Activated CD8-positive, alpha-beta T cell treated with anti-CD3 and anti-CD28 coated beads, Interleukin-2, amount 10 ng/mL, durations not matched to agents 7 days and 5 days (primary cell): ENCODE measurements at regions of chr16 and their contacts with region 1.

Region 1: GRCh38 chr16:66406534-66407221 is 20.4 kb upstream of the BEAN1 start:
- DNase-seq: peak; percentile 93
- ATAC-seq: peak; percentile 94
- H3K4me3 Mint-ChIP-seq: peak overlapping the region; percentile 77
- H3K27ac Mint-ChIP-seq: peak overlapping the region; percentile 60
- H3K4me1 Mint-ChIP-seq: peaks cover 27% of the 10 kb centered on the region
- H3K27me3 Mint-ChIP-seq: peaks cover 18% of the 10 kb centered on the region

Region 2: DNA sequence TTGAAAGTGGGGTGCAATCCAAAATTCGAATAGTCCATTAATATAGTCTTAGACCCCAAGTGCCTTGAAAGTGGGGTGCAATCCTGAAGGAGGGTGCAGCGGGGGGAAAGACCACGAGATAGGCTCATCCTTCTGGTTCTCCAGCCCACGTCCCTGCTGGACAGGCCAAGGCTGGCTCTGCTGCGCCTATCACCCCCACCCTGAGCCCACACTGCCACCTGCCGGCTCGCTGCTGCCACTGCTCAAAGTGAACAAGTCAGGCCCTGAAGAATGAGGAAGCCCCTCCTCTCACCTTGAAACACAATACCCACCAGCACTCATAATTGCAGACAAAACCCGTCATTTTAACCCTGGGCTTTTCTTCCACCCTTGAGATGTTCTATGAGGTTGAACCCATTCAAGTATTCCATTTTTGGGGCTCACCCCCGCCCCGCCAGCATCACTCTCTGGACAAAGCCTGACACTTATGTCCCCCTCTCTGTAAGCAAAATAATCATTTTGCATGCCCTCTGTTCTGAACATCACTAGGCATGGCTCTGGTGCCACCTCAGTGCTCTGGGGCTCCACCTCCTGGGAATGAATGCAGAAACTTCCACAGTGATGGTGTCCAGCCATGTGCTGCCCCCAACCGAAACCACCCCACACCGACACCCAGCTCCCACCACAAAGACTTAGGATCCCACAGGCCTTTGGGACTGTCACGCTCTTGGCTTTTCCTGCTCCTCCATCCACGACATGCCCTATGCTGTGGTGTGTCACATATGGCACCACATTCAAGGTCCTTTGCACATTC is 77.2 kb after region 1 on chr16:
- CTCF ChIA-PET with region 1: interaction called, 195 read pairs
- POLR2A ChIA-PET with region 1: no interaction called
- DNase-seq: peak; percentile 83
- ATAC-seq: peak; percentile 76
- H3K4me3 Mint-ChIP-seq: no peak overlapping the region
- H3K27ac Mint-ChIP-seq: peak overlapping the region; percentile 9
- H3K4me1 Mint-ChIP-seq: peaks cover 38% of the 10 kb centered on the region
- H3K27me3 Mint-ChIP-seq: no peaks in the 10 kb centered on the region

Region 3: GRCh38 chr16:66495440-66495839 is 88.8 kb after region 1 on chr16:
- CTCF ChIA-PET with region 1: no interaction called
- POLR2A ChIA-PET with region 1: no interaction called
- DNase-seq: no peak
- ATAC-seq: no peak
- H3K4me3 Mint-ChIP-seq: no peak overlapping the region
- H3K27ac Mint-ChIP-seq: no peak overlapping the region
- H3K4me1 Mint-ChIP-seq: peaks cover 7% of the 10 kb centered on the region
- H3K27me3 Mint-ChIP-seq: peaks cover 8% of the 10 kb centered on the region

Region 4: GRCh38 chr16:66552286-66553177 is 145.9 kb after region 1 on chr16 and contains the start of gene CKLF:
- CTCF ChIA-PET with region 1: interaction called, 14 read pairs
- POLR2A ChIA-PET with region 1: interaction called, 4 read pairs
- DNase-seq: peak; percentile 93
- ATAC-seq: peak; percentile 80
- H3K4me3 Mint-ChIP-seq: peak within 1 kb of the TSS; percentile 90
- H3K27ac Mint-ChIP-seq: peak within 1 kb of the TSS; percentile 92
- H3K4me1 Mint-ChIP-seq: peaks cover 75% of the 10 kb centered on the region
- H3K27me3 Mint-ChIP-seq: no peaks in the 10 kb centered on the region
- total RNA-seq, gene CKLF: 137 to 139 TPM

Region 5: DNA sequence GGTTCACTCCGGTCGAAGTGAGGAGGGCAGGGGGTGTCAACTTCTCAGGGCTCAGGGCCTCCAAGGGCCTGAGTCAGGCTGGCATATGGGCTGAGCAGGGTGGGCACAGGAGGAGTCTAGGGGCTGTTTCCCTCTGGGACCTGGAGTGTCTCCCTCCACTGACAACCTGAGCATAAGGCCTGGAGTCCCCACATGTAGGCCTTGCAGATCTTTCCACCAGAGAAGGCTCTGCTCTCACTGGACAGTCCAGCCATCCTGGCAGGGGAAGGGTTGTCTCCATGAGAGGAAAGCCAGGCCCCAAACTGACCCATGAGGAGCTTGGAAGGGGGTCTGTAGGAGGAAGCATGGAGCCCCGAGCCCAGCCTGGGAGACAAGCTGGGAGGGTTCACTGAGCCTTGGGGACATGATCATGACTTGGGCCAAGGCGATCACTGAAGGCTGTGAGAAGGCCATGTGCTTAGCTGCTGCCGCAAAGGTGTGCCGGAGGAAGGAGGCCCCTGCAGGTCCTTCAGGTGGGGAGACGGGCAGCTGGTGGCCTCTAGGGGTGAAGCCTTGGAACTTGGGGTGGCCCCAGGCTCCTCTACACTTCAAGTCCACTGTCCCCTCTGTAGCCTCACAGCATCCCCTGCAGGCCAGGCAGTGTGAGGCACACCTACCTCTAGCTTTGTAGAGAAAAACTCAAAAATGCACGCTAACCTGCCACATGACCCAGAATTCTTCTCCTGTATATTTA is 182.5 kb after region 1 on chr16:
- CTCF ChIA-PET with region 1: interaction called, 57 read pairs
- POLR2A ChIA-PET with region 1: no interaction called
- DNase-seq: peak; percentile 83
- ATAC-seq: peak; percentile 88
- H3K4me3 Mint-ChIP-seq: peak overlapping the region; percentile 55
- H3K27ac Mint-ChIP-seq: peak overlapping the region; percentile 55
- H3K4me1 Mint-ChIP-seq: peaks cover 52% of the 10 kb centered on the region
- H3K27me3 Mint-ChIP-seq: no peaks in the 10 kb centered on the region

Region 6: DNA sequence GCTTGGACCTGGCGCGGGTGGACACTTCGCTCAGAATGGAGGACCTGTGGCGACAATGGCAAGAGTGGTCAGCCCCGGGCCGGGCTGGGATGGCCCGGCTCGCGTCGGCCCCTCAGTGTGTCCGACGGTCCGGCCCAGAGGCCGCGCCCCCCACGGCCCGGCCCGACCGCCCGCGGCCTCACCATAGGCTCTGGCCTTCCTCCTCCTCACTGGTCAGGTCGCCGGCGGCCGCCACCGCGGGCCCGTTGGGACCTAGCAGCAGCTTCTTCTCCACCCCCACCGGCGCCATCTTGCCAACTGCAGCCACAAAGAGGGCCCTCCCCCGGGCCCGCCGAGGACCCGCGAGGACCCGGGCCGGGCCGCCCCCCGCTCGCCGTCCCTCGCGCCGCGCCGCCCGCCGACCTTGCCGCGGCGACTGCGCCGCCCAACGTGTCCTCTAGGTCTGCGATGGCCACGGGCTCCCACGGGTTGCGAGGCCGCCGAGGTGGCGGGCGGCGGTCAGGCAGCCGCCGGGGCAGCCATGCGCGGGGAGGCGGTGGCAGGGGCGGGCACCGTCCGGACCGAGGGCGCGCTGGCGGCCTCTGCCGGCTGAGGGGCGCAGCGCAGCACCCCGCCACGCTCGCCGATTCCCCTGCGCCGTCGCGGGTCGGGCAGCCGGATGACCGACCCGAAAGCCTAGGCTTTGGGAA is 344.8 kb after region 1 on chr16 and contains the start of gene DYNC1LI2:
- CTCF ChIA-PET with region 1: interaction called, 11 read pairs
- POLR2A ChIA-PET with region 1: no interaction called
- DNase-seq: peak; percentile 84
- ATAC-seq: peak; percentile 84
- H3K4me3 Mint-ChIP-seq: peak within 1 kb of the TSS; percentile 80
- H3K27ac Mint-ChIP-seq: peak within 1 kb of the TSS; percentile 90
- H3K4me1 Mint-ChIP-seq: peaks cover 44% of the 10 kb centered on the region
- H3K27me3 Mint-ChIP-seq: peaks cover 17% of the 10 kb centered on the region
- total RNA-seq, gene DYNC1LI2: 56.5 to 63.1 TPM